ENCODE measurements at regions of chr17 and their contacts with region 1.

Region 1: GRCh38 chr17:38786372-38786771 is 13.0 kb downstream of the PIP4K2B start:
- DNase-seq: no peak
- H3K4me3 ChIP-seq: no peak overlapping the region
- H3K27ac ChIP-seq: no peak overlapping the region
- H3K4me1 ChIP-seq: peaks cover 0 to 5% (median under 1%) of the 10 kb centered on the region in 4 experiments; a peak in 3 of 7 replicates
- H3K27me3 ChIP-seq: no peaks in the 10 kb centered on the region
- CTCF ChIP-seq: no peak
- EP300 ChIP-seq: no peak
- POLR2A ChIP-seq: no peak
- RAD21 ChIP-seq: no peak

Region 2: DNA sequence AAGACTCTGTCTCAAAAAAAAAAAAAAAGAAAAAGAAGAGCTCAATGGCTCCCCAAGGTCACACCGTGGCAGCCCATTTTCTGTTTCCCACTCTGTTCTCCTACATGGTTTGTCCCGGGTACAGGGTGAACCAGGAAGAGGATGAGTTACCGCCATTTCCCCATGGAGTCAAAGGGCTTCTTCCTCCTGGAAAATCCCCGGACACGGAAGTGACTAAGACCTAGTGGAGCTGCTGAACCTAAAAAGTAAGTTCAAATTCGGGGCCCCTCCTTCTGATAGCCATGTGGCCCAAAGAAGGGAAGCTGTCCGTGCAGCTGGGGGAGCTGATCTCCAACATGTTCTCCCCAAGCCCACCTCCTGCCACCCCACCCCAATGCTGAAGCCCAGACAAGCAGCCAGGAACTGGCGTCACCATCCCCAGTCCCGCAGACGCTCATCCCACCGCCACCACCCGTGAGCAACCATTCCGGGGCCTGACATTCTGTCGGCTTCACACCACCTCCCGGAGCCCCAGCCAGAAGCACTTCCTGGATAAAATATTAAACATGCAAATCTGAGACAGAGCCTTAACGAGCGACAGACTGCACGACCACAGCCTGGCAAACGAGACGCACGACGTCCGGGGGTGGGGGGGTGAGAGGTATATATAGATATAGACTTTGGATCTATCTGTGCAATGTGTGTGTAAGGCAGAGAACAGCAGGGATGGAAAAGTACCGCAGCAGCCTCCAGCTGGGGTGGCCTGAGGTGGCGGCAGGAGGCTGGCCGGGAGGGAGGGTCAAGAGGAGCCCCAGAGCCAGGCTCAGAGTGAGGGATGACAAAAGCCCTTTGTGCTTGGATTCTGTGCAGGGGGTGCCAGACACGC is 129.2 kb before region 1 on chr17:
- CTCF ChIA-PET with region 1: no interaction called
- POLR2A ChIA-PET with region 1: no interaction called
- DNase-seq: no peak
- H3K4me3 ChIP-seq: no peak overlapping the region
- H3K27ac ChIP-seq: no peak overlapping the region
- H3K4me1 ChIP-seq: peaks cover 0 to 18% (median 4%) of the 10 kb centered on the region in 4 experiments; a peak in 6 of 7 replicates
- H3K27me3 ChIP-seq: peaks cover 0 to 3% (median 0%) of the 10 kb centered on the region in 4 experiments; a peak in 2 of 7 replicates
- CTCF ChIP-seq: no peak
- EP300 ChIP-seq: no peak
- POLR2A ChIP-seq: no peak
- RAD21 ChIP-seq: no peak

Region 3: DNA sequence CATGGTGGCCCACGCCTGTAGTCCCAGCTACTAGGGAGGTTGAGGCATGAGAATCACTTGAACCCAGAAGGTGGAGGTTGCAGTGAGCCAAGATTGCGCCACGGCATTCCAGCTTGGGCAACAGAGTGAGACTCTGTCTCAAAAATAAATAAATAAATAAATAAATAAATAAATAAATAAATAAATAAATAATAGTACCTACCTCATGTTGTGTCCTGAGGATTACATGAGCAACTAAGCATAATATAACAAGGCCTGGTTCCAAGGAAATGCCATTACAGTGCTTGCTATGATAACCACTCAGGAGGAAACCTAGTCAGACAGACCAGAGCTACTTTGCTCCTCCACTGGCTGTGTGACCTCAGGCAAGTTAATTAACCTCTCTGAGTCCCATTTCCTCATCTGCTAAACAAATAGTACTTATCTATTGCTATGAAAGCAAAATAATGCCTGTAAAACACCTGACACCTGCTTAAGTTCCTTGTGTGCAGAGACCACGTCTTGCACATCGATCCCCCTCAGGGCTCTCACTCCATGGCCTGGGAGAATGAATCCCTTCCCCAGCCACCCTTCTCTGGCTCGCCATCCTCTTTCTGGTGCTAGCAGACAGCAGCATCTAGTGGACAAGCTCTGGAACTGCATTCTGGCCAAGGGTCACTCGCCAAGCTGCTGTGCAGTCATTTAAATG is 119.1 kb before region 1 on chr17:
- CTCF ChIA-PET with region 1: no interaction called
- POLR2A ChIA-PET with region 1: no interaction called
- DNase-seq: peak; percentile 51 to 78
- H3K4me3 ChIP-seq: no peak overlapping the region
- H3K27ac ChIP-seq: no peak overlapping the region
- H3K4me1 ChIP-seq: peaks cover 4 to 28% (median 16%) of the 10 kb centered on the region in 4 experiments; a peak in 6 of 7 replicates
- H3K27me3 ChIP-seq: peaks cover 26 to 49% (median 46%) of the 10 kb centered on the region in 4 experiments
- CTCF ChIP-seq: peak; percentile 98 to 100 (median 99)
- EP300 ChIP-seq: no peak
- POLR2A ChIP-seq: no peak
- RAD21 ChIP-seq: peak; percentile 100

Region 4: DNA sequence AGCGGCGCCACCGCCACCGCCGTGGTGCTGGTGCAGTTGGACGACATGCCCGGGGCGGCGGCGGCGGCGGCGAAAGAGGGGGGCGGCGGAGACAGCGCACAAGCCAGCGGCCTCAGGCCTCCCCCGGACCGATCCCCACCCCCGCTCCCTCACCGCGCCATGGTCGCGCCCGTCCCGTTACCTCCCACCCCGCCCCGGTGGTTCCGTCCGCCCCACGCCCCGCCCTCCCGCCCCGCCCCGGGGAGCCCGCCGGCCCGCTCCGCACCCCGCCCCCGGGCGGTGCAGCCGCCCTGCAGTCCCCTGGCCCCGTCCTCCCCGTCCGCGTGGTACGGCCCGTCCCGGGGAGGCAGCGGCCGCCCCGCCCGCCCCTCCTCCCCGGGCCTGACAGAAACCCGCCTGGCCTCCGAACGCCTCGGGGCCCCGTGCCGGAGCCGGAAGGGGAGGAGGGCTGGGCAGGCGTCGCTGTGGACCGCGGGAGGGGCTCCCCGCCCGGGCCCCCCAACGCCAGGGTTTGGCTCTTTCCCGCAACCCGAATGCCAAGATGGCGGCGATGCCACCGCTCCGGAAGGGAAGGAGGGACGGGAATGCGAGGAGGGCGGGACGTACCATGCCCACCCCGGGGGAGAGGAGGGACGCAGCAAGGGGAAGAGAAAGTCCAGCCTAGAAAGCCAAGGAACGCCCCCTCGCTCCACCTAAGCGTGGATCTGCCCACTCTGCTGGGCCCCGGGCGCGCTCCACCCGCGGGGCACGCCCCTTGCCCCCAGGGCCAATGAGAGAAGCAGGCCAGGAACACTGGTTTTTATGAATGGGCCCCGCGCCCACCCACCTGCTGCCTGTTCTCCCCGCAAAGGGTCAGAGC is 13.2 kb after region 1 on chr17 and contains the start of gene PIP4K2B:
- CTCF ChIA-PET with region 1: interaction called, 4 read pairs
- POLR2A ChIA-PET with region 1: interaction called, 14 read pairs
- DNase-seq: peak; percentile 93 to 96
- H3K4me3 ChIP-seq: peak within 1 kb of the TSS; percentile 79 to 90 (median 82)
- H3K27ac ChIP-seq: peak within 1 kb of the TSS; percentile 99
- H3K4me1 ChIP-seq: peaks cover 5 to 8% (median 5%) of the 10 kb centered on the region in 4 experiments; a peak in 4 of 7 replicates
- H3K27me3 ChIP-seq: no peaks in the 10 kb centered on the region
- CTCF ChIP-seq: no peak
- EP300 ChIP-seq: peak in 1 of 2 experiments; percentile 98; a peak in 2 of 3 replicates
- POLR2A ChIP-seq: peak; percentile 83 to 86
- RAD21 ChIP-seq: no peak
- total RNA-seq, gene PIP4K2B: 57.7 and 57.8 TPM in 2 replicates

Region 5: GRCh38 chr17:38994026-38994425 is 207.7 kb after region 1 on chr17:
- CTCF ChIA-PET with region 1: no interaction called
- POLR2A ChIA-PET with region 1: no interaction called
- DNase-seq: no peak
- H3K4me3 ChIP-seq: no peak overlapping the region
- H3K27ac ChIP-seq: no peak overlapping the region
- H3K4me1 ChIP-seq: no peaks in the 10 kb centered on the region
- H3K27me3 ChIP-seq: no peaks in the 10 kb centered on the region
- CTCF ChIP-seq: no peak
- EP300 ChIP-seq: no peak
- POLR2A ChIP-seq: no peak
- RAD21 ChIP-seq: no peak